ENCODE measurements at regions of chr6 and their contacts with region 1.

Region 1: GRCh38 chr6:100479179-100480035 is 14.7 kb upstream of the SIM1 start:
- DNase-seq: no peak
- H3K4me3 Mint-ChIP-seq: no peak overlapping the region
- H3K27ac Mint-ChIP-seq: no peak overlapping the region
- H3K4me1 Mint-ChIP-seq: peaks cover 14% of the 10 kb centered on the region
- H3K27me3 Mint-ChIP-seq: peaks cover 8% of the 10 kb centered on the region

Region 2: GRCh38 chr6:100116411-100117194 is 362.8 kb before region 1 on chr6:
- CTCF ChIA-PET with region 1: interaction called, 28 read pairs
- POLR2A ChIA-PET with region 1: no interaction called
- DNase-seq: peak; percentile 45
- H3K4me3 Mint-ChIP-seq: no peak overlapping the region
- H3K27ac Mint-ChIP-seq: no peak overlapping the region
- H3K4me1 Mint-ChIP-seq: peaks cover 15% of the 10 kb centered on the region
- H3K27me3 Mint-ChIP-seq: peaks cover 19% of the 10 kb centered on the region

Measured in activated CD4-positive, alpha-beta memory T cell treated with anti-CD3 and anti-CD28 coated beads, Interleukin-2, amount 10 ng/mL, durations not matched to agents 7 days and 5 days (primary cell).